ENCODE measurements at regions of chr1 and their contacts with region 1.

Region 1: DNA sequence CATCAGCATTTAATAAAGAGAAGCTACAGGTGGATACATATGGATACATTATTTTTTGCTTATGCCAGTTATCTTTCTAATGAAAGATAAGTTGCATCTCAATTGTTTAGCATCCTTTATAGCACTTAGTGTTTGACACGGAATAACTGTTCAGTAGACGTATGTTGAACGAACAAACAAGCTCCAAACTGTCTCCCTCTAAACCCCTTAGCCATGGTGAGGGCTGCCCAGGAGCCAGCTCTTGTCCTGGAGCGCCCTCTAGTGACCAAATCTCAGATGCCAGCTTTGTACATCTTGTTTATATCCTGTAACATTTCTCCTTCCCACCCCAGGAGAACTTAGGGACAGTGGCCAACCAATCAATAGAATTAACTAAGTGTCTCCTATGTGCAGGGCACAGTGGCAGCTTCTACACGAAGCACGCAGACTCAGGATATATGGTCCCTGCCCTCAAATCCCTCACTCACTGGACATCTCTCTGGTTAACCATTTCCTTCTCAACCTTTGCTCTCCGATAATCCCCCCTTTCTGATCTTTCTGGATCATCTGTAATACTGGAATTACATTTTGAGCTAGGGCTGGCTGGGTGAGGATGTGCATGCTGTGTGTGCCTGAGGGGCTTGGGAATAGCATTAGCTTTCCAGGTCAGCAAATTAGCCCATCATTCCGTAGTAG is 22.9 kb downstream of the KCNA10 start:
- DNase-seq: peak; percentile 88
- ATAC-seq: peak; percentile 87
- H3K4me3 Mint-ChIP-seq: no peak overlapping the region
- H3K27ac Mint-ChIP-seq: no peak overlapping the region
- H3K4me1 Mint-ChIP-seq: peaks cover 14% of the 10 kb centered on the region
- H3K27me3 Mint-ChIP-seq: no peaks in the 10 kb centered on the region

Region 2: GRCh38 chr1:109985276-109986053 is 510.6 kb before region 1 on chr1:
- CTCF ChIA-PET with region 1: no interaction called
- POLR2A ChIA-PET with region 1: no interaction called
- DNase-seq: no peak
- ATAC-seq: no peak
- H3K4me3 Mint-ChIP-seq: peak overlapping the region; percentile 100
- H3K27ac Mint-ChIP-seq: peak overlapping the region; percentile 97
- H3K4me1 Mint-ChIP-seq: peaks cover 42% of the 10 kb centered on the region
- H3K27me3 Mint-ChIP-seq: no peaks in the 10 kb centered on the region

Region 3: DNA sequence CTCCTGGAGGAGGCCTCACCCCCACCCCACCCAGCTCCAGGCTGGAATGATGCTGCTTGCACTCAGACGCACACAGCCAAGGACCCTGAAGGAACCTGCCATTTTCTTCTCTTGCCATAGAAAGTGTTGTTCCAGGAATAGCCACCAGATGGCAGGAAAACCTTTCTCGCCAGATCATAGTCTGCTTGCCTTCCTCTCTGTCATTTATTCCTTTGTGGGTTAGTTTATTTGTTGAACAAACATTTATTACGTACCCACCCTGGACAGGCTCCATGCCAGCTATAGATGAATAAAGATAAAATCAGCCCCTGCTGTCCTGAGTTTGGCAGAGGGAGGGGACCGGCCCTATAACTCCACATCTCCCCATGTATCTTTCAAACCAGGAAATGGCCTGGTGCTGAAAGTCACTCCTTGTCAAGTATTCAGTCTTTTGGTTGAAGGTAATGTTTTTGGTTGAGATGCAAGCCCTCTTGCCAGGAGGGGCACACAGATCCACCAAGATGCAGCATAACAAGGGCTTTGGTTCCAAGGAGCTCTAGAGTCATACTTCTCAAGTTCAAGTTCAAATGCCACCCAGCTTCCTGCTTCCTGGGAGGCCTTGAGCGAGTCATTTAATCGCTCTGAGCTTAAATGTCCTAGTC is 292.9 kb before region 1 on chr1:
- CTCF ChIA-PET with region 1: interaction called, 86 read pairs
- POLR2A ChIA-PET with region 1: no interaction called
- DNase-seq: peak; percentile 85
- ATAC-seq: peak; percentile 66
- H3K4me3 Mint-ChIP-seq: no peak overlapping the region
- H3K27ac Mint-ChIP-seq: peak overlapping the region; percentile 90
- H3K4me1 Mint-ChIP-seq: peaks cover 24% of the 10 kb centered on the region
- H3K27me3 Mint-ChIP-seq: no peaks in the 10 kb centered on the region

Region 4: GRCh38 chr1:110243574-110243973 is 252.5 kb before region 1 on chr1:
- CTCF ChIA-PET with region 1: no interaction called
- POLR2A ChIA-PET with region 1: no interaction called
- DNase-seq: no peak
- ATAC-seq: no peak
- H3K4me3 Mint-ChIP-seq: no peak overlapping the region
- H3K27ac Mint-ChIP-seq: no peak overlapping the region
- H3K4me1 Mint-ChIP-seq: no peaks in the 10 kb centered on the region
- H3K27me3 Mint-ChIP-seq: no peaks in the 10 kb centered on the region

Region 5: DNA sequence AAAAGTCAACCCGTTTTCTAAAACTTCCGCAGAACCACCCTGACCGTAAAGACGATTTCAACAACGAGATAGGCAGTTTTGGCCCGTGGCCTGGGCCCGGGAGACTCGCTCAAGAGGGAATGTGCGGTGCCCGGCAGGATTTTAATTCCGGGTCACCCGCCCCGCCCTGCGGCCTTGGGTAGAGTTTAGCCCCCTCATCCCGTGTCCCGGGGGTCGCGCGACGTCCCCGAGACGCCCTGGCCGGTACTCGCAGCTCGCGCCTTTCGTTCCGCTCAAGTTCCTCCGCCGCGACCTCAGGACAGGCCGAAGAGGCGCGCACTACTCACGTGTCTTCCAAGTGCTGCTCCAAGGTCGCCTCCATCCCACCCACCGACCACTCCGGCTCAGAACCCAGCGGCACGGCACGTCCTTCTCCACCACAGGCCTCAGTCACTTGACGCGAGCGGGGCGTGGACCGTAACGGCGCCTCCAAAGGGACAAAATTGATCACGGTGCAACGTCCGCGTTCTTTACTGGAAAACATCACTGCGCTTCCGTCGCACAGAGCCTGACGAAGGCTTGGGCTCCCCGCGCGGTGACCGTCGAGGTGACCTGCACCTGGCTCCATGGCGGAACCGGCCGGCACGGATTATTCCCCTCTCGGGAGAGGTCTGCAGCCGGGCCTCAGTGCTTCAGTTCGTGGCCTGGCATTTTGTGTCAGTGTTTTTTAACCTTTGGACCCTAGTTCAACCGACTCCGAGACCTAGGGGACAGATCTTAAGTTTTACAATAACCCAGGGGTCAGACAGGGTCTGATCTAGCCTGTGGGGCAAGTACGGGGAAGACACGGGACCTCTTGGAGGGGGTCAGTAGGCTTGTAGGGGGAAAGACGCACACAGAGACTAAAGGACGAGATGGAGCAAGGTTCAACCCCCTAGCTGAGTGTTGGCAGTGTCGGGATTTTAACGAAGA is 88.5 kb before region 1 on chr1 and contains the start of gene LAMTOR5:
- CTCF ChIA-PET with region 1: interaction called, 55 read pairs
- POLR2A ChIA-PET with region 1: no interaction called
- DNase-seq: peak; percentile 96
- ATAC-seq: peak; percentile 93
- H3K4me3 Mint-ChIP-seq: peak within 1 kb of the TSS; percentile 100
- H3K27ac Mint-ChIP-seq: peak within 1 kb of the TSS; percentile 100
- H3K4me1 Mint-ChIP-seq: peaks cover 28% of the 10 kb centered on the region
- H3K27me3 Mint-ChIP-seq: no peaks in the 10 kb centered on the region
- total RNA-seq, gene LAMTOR5: 123 TPM

Region 6: DNA sequence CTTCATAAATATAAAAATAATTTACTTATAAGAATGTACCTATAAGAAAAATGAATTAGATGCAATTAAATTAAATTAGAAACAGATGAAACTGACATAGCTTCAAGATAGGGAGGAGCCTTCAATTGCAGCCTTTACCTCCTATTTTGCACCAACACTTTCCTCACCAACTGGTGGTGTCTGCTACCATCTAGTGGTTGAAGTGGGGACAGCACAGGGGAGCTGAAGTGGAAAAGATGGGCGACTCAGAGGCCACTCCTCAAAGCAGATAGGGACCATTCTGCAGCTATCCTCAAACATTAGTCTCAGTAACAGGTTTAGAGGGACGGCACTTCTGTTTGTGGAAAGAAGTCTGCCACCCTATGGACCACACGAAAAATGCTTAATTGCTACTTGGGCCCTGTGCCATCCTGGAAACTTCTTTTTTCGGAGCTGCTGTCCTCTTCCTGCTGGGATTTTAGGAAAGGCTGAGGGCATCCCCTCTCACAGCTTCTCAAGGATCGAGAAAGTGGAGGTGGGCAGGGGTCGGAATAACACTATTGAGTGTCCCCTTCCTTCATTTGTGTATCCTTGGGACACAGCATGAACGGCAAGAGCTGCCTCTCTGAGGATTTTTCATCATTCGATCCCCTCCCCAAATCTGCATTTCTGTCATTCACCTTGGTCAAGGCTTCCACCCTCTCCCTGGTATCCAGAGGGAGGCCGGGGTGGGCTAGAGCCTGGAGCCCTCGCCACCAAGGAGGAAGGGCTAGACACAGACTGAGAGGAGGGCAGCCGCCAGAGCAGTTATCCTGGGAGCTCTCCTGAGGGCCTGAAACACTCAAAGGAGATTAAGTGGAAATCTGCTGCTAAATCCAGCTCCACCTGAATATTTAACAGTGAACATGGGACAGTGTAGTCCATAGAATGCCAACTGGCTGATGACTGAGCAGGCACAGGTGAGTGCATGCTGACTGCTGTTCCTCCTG is 35.5 kb before region 1 on chr1:
- CTCF ChIA-PET with region 1: interaction called, 41 read pairs
- POLR2A ChIA-PET with region 1: no interaction called
- DNase-seq: peak; percentile 88
- ATAC-seq: peak; percentile 88
- H3K4me3 Mint-ChIP-seq: no peak overlapping the region
- H3K27ac Mint-ChIP-seq: no peak overlapping the region
- H3K4me1 Mint-ChIP-seq: no peaks in the 10 kb centered on the region
- H3K27me3 Mint-ChIP-seq: no peaks in the 10 kb centered on the region

Region 7: GRCh38 chr1:110482662-110483307 is 13.3 kb before region 1 on chr1:
- CTCF ChIA-PET with region 1: interaction called, 37 read pairs
- POLR2A ChIA-PET with region 1: no interaction called
- DNase-seq: no peak
- ATAC-seq: no peak
- H3K4me3 Mint-ChIP-seq: no peak overlapping the region
- H3K27ac Mint-ChIP-seq: no peak overlapping the region
- H3K4me1 Mint-ChIP-seq: no peaks in the 10 kb centered on the region
- H3K27me3 Mint-ChIP-seq: peaks cover 8% of the 10 kb centered on the region

Region 8: GRCh38 chr1:110619412-110620249 is 123.6 kb after region 1 on chr1:
- CTCF ChIA-PET with region 1: interaction called, 10 read pairs
- POLR2A ChIA-PET with region 1: no interaction called
- DNase-seq: peak; percentile 93
- ATAC-seq: peak; percentile 90
- H3K4me3 Mint-ChIP-seq: peak overlapping the region; percentile 82
- H3K27ac Mint-ChIP-seq: peak overlapping the region; percentile 93
- H3K4me1 Mint-ChIP-seq: peaks cover 50% of the 10 kb centered on the region
- H3K27me3 Mint-ChIP-seq: peaks cover under 1% of the 10 kb centered on the region